ENCODE measurements at regions of chr13 and their contacts with region 1.

Region 1: GRCh38 chr13:112873851-112874750 is 94.9 kb upstream of the MCF2L start:
- DNase-seq: peak; percentile 74
- ATAC-seq: peak; percentile 96
- H3K4me3 ChIP-seq: no peak overlapping the region
- H3K27ac ChIP-seq: no peak overlapping the region
- H3K4me1 ChIP-seq: peaks cover 7% of the 10 kb centered on the region; the same call in 1 of the 2 replicates
- H3K27me3 ChIP-seq: no peaks in the 10 kb centered on the region
- CTCF ChIP-seq: peak; percentile 80

Region 2: GRCh38 chr13:112616586-112617362 is 257.3 kb before region 1 on chr13:
- CTCF ChIA-PET with region 1: no interaction called
- POLR2A ChIA-PET with region 1: no interaction called
- intact Hi-C with region 1: loop called (anchors 2 kb)
- DNase-seq: peak; percentile 53
- ATAC-seq: peak; percentile 37; the same call in 1 of the 2 replicates
- H3K4me3 ChIP-seq: no peak overlapping the region
- H3K27ac ChIP-seq: no peak overlapping the region
- H3K4me1 ChIP-seq: no peaks in the 10 kb centered on the region
- H3K27me3 ChIP-seq: peaks cover 17% of the 10 kb centered on the region
- CTCF ChIP-seq: peak; percentile 68

Region 3: GRCh38 chr13:112657850-112658444 is 216.2 kb before region 1 on chr13:
- CTCF ChIA-PET with region 1: interaction called, 10 read pairs
- POLR2A ChIA-PET with region 1: no interaction called
- intact Hi-C with region 1: no loop called
- DNase-seq: peak; percentile 63
- ATAC-seq: peak; percentile 85
- H3K4me3 ChIP-seq: no peak overlapping the region
- H3K27ac ChIP-seq: peak overlapping the region; percentile 17; the same call in 1 of the 2 replicates
- H3K4me1 ChIP-seq: peaks cover 8% of the 10 kb centered on the region
- H3K27me3 ChIP-seq: no peaks in the 10 kb centered on the region
- CTCF ChIP-seq: no peak

Region 4: DNA sequence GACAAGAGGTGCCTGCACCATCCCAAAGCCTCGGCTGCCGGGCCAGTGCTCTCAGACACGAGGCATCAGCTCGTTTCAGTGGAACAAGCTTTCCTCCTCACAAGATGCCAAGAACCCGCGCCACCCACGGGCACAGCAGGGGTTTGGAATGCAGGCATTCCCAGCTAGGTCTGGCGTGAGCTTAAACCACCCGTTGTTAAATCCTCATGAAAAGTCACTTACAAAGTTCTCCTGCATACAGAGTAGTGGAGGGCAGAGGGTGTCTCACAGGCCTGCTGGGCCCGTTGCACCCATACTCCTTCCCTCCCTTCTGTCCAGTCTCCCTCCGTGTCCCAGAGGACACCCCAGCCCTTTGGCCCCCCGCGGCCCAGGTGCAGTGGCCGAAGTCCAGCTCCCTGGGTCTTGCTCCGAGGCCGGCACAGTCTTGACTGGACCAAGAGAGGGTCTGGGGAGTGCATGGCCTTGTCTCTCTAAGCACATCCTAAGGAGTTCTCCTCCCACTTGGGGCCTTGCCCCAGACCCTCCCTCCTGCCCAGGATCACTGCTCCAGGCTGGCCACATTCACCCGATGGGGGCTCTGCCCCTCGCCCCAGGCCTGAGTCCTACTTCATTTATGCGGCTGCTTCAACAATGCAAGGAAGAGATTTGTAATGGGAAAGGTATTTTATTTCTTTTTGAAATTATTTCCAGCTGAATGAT is 525.0 kb after region 1 on chr13:
- CTCF ChIA-PET with region 1: no interaction called
- POLR2A ChIA-PET with region 1: no interaction called
- intact Hi-C with region 1: no loop called
- DNase-seq: no peak
- ATAC-seq: no peak
- H3K4me3 ChIP-seq: no peak overlapping the region
- H3K27ac ChIP-seq: no peak overlapping the region
- H3K4me1 ChIP-seq: peaks cover 2% of the 10 kb centered on the region; the same call in 1 of the 2 replicates
- H3K27me3 ChIP-seq: no peaks in the 10 kb centered on the region
- CTCF ChIP-seq: no peak